ENCODE measurements at regions of chr2 and their contacts with region 1.

Region 1: DNA sequence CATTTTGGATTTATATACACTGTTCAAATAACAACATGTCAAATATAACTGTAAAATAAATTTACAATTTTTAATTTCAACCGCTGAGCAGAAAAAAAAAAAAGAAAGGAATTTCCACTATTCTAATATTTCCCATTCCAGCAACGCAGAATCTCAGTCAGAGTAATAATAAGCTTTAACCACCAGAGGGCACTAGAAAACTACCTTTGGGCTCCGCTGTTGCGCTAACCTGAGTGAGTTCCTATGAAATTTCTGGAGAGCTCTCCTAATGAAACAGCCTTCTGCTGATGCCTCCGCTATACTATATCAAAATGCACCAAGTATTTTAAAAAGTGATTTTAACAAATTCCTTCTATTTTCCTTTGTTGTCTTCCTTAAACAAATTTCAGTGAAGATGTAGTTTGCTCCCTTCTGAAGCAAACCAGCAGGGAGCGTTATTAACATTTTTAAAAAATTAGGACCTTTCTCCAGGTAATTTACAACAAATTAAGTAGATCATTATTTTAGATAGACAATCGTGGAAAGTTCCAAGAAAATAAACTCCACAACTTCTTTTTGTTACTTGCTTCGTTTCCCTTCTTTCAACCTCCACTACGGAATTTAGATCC is 23.0 kb downstream of the ERMN start:
- DNase-seq: peak; percentile 26
- H3K4me3 Mint-ChIP-seq: no peak overlapping the region
- H3K27ac Mint-ChIP-seq: no peak overlapping the region
- H3K4me1 Mint-ChIP-seq: peaks cover 22% of the 10 kb centered on the region
- H3K27me3 Mint-ChIP-seq: peaks cover 14% of the 10 kb centered on the region

Region 2: GRCh38 chr2:157261199-157261783 is 41.3 kb before region 1 on chr2:
- intact Hi-C with region 1: loop called (anchors 2 kb)
- DNase-seq: peak; percentile 12
- H3K4me3 Mint-ChIP-seq: peak overlapping the region; percentile 57
- H3K27ac Mint-ChIP-seq: peak overlapping the region; percentile 86
- H3K4me1 Mint-ChIP-seq: peaks cover 37% of the 10 kb centered on the region
- H3K27me3 Mint-ChIP-seq: peaks cover 2% of the 10 kb centered on the region

Region 3: GRCh38 chr2:157327621-157328500 is 25.3 kb after region 1 on chr2:
- intact Hi-C with region 1: loop called (anchors 1 kb)
- DNase-seq: peak; percentile 74
- H3K4me3 Mint-ChIP-seq: peak overlapping the region; percentile 32
- H3K27ac Mint-ChIP-seq: peak overlapping the region; percentile 26
- H3K4me1 Mint-ChIP-seq: peaks cover 38% of the 10 kb centered on the region
- H3K27me3 Mint-ChIP-seq: no peaks in the 10 kb centered on the region

Region 4: GRCh38 chr2:157596992-157597681 is 294.5 kb after region 1 on chr2:
- intact Hi-C with region 1: loop called (anchors 1 kb)
- DNase-seq: peak; percentile 47
- H3K4me3 Mint-ChIP-seq: peak overlapping the region; percentile 63
- H3K27ac Mint-ChIP-seq: no peak overlapping the region
- H3K4me1 Mint-ChIP-seq: peaks cover 7% of the 10 kb centered on the region
- H3K27me3 Mint-ChIP-seq: peaks cover 39% of the 10 kb centered on the region

Region 5: DNA sequence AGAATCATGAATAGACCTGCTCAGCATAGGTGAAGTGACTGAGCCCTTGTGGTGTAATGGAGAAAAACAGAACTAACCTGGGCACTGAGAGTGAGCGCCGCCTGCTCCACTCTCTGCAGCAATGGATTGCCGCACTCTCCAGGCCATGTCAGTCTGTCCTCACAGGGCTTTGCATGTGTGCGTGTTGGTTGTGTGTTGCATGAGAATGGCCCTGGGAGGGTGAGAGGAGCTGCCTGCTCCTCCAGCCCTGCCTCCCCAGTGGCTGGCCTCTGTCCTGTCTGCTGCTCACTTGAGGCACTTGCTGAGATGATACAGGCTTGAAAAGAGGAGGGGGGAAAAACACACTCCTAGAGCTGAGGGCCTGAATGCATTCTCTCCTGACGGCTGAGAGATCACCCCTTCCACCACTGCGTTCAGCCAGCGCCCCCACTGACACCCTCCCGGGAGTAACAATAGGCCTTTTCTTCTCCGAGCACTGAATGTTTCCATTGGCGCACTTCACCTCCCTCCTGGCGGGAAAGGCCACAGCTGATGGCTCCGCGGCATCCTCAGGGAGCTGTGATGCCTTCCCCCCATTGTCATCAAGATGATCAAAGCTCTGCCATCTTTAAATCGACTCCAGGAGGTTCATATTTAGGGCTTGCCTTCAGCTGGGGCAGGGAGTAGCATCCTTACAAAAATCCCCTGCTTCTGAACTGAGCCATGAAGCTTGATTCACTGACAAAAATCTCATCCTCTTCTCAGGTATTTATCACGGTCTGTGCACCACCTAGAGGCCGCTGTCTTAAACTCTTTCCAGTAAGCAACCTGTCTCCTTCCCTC is 1442.7 kb after region 1 on chr2:
- intact Hi-C with region 1: loop called (anchors 5 kb)
- DNase-seq: no peak
- H3K4me3 Mint-ChIP-seq: no peak overlapping the region
- H3K27ac Mint-ChIP-seq: no peak overlapping the region
- H3K4me1 Mint-ChIP-seq: no peaks in the 10 kb centered on the region
- H3K27me3 Mint-ChIP-seq: peaks cover 7% of the 10 kb centered on the region

Region 6: DNA sequence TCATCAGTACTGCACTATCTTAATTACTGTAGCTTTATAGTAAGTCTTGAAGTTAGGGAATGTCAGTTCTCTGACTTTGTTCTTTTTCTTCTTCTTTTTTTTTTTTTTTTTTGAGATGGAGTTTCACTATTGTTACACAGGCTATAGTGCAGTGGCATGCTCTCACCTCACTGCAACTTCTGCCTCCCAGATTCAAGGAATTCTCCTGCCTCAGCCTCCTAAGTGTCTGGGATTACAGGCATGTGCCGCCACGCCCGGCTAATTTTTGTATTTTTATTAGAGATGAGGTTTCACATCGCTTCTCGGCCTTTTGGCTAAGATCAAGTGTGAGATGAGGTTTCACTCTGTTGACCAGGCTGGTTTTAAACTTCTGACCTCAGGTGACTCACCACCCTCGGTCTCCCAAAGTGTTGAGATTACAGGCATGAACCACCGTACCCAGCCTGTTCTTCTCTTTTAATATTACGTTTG is 1623.9 kb after region 1 on chr2:
- intact Hi-C with region 1: no loop called
- DNase-seq: no peak
- H3K4me3 Mint-ChIP-seq: no peak overlapping the region
- H3K27ac Mint-ChIP-seq: no peak overlapping the region
- H3K4me1 Mint-ChIP-seq: peaks cover 7% of the 10 kb centered on the region
- H3K27me3 Mint-ChIP-seq: peaks cover 5% of the 10 kb centered on the region